B cell (primary cell): ENCODE measurements at regions of chr2 and their contacts with region 1.

Region 1: GRCh38 chr2:174748948-174749347 is 15.3 kb downstream of the CHRNA1 start:
- DNase-seq: peak; percentile 79
- ATAC-seq: peak; percentile 26
- H3K4me3 ChIP-seq: no peak overlapping the region
- H3K4me3 Mint-ChIP-seq: peak overlapping the region; percentile 10
- H3K27ac ChIP-seq: peak overlapping the region in 1 of 2 donors; percentile 79
- H3K27ac Mint-ChIP-seq: peak overlapping the region; percentile 23
- H3K4me1 ChIP-seq: peaks cover 44 to 48% of the 10 kb centered on the region in 2 donors
- H3K4me1 Mint-ChIP-seq: peaks cover 42% of the 10 kb centered on the region
- H3K27me3 ChIP-seq: peaks cover 0 to 6% (median 0%) of the 10 kb centered on the region in 4 experiments
- H3K27me3 Mint-ChIP-seq: peaks cover 3% of the 10 kb centered on the region
- CTCF ChIP-seq: peak; percentile 89

Region 2: GRCh38 chr2:174593574-174594203 is 155.3 kb before region 1 on chr2:
- CTCF ChIA-PET with region 1: no interaction called
- POLR2A ChIA-PET with region 1: no interaction called
- intact Hi-C with region 1: loop called (anchors 2 kb)
- DNase-seq: peak; percentile 88
- ATAC-seq: peak; percentile 66
- H3K4me3 ChIP-seq: peak overlapping the region; percentile 53 to 92 (median 71)
- H3K4me3 Mint-ChIP-seq: peak overlapping the region; percentile 93
- H3K27ac ChIP-seq: peak overlapping the region; percentile 93 to 98
- H3K27ac Mint-ChIP-seq: peak overlapping the region; percentile 96
- H3K4me1 ChIP-seq: peaks cover 63 to 65% of the 10 kb centered on the region in 2 donors
- H3K4me1 Mint-ChIP-seq: peaks cover 65% of the 10 kb centered on the region
- H3K27me3 ChIP-seq: no peaks in the 10 kb centered on the region
- H3K27me3 Mint-ChIP-seq: no peaks in the 10 kb centered on the region
- CTCF ChIP-seq: no peak

Region 3: DNA sequence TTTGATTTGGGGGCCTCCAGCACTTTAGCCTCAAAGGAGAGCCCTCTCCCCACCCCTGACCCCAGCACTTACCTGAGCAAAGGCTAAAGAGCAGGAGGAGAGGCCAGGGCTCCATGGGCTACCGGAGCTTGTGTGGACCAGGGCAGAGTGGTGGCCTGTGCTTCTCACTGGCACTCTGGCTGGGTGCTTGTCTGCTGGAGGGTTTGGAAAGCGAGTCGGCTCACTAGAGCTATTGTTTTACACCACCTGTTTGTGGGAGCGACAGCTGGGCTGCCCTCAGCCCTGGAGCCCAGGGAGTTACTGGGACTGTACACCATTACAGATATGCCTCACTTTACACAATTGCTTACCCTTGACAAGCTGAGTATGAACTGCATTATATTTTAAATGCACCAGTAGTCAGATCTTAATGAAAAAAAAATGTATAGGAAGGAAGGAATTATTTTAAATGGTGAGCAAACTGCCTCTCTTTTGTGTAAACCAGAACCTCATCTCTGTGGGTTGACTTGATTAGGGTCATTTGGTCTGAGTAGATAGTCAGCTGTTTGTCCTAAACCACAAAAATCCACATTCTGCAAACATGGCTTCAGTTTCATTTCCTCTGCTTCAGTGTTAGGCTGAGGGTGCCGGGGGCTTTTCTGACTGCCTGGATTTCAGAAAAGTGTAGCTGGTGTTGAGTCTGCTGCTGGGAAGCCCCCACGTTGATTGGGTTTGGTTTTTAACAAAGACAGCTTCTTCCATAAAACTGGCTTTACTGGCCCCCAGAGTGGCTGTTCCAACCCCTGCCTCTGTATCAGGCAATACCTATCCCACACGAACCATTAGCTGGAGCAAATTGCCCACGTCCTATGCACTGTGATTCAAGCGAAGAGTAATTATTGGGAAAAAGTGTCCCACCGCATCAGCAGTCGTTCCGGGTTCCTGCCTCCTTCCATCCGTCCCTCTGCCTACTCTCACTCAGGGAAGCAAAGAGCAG is 15.6 kb after region 1 on chr2 and contains the start of gene CHRNA1:
- CTCF ChIA-PET with region 1: interaction called, 11 read pairs
- POLR2A ChIA-PET with region 1: no interaction called
- intact Hi-C with region 1: no loop called
- DNase-seq: no peak
- ATAC-seq: no peak
- H3K4me3 ChIP-seq: no peak within 1 kb of the TSS
- H3K4me3 Mint-ChIP-seq: no peak within 1 kb of the TSS
- H3K27ac ChIP-seq: no peak within 1 kb of the TSS
- H3K27ac Mint-ChIP-seq: no peak within 1 kb of the TSS
- H3K4me1 ChIP-seq: no peaks in the 10 kb centered on the region
- H3K4me1 Mint-ChIP-seq: peaks cover 5% of the 10 kb centered on the region
- H3K27me3 ChIP-seq: peaks cover 0 to 24% (median 6%) of the 10 kb centered on the region in 4 experiments
- H3K27me3 Mint-ChIP-seq: peaks cover 28% of the 10 kb centered on the region
- CTCF ChIP-seq: no peak
- total RNA-seq, gene CHRNA1: 0.20 TPM in 1 of 2 replicates, not detected in the other

Region 4: DNA sequence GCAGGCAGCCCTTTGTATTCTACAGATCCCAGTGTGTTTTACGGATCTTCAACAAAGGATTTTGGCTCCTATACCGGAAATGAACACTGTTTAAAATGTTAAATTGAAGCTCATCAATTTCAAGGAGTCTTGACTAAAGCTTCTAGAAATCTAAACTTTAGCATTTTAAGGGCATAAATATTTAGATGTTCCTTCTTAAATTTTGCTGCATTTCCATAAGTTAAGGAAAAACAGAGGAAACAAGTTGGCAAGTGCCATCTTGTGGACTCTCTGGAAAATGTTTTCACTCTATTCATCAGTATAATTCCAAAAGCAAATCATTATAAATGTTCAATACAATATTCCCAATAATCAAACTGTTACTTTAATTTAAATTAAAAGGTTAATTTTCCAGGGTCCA is 236.7 kb after region 1 on chr2:
- CTCF ChIA-PET with region 1: interaction called, 39 read pairs
- POLR2A ChIA-PET with region 1: no interaction called
- intact Hi-C with region 1: loop called (anchors 1 kb)
- DNase-seq: no peak
- ATAC-seq: no peak
- H3K4me3 ChIP-seq: no peak overlapping the region
- H3K4me3 Mint-ChIP-seq: no peak overlapping the region
- H3K27ac ChIP-seq: no peak overlapping the region
- H3K27ac Mint-ChIP-seq: no peak overlapping the region
- H3K4me1 ChIP-seq: no peaks in the 10 kb centered on the region
- H3K4me1 Mint-ChIP-seq: peaks cover 2% of the 10 kb centered on the region
- H3K27me3 ChIP-seq: peaks cover 0 to 3% (median 2%) of the 10 kb centered on the region in 4 experiments
- H3K27me3 Mint-ChIP-seq: peaks cover 18% of the 10 kb centered on the region
- CTCF ChIP-seq: no peak

Region 5: DNA sequence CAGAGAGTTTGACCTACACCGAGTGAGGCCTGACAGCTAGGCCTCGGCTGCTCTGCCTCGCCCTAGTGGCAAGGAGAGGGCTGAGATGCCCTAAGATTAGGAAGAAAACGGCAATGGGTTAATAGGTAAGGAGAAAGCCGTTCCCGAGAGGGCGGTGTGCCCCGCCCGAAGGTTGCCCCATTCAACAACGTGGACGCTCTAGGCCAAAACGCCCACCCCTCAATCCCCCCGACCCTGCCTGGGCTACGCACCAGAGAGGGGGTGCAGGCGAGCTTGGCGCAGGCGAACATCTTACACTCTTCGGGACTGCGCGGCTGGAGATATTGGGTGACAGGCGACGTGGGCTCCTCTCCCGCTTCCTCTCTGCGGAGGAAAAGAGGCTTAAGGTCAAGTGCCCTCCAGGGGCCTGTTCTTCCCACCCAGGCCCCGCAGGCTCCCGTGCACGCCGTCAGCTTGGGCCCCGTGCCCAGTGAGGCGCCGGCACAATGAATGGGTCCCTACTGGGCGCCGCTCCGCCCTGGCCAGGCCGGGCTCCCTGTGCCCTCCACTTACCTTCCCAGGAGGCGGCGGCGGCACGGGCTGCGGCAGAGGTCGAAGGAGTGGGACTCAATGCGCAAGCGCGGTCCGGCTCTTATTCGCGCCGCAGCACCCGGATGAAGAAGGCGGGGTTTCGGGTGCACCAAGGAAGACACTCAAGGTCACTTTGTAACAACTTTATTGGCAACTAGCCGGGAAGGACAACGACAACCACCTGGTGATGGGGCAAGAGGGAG is 432.3 kb after region 1 on chr2 and contains the start of gene ATP5MC3:
- CTCF ChIA-PET with region 1: no interaction called
- POLR2A ChIA-PET with region 1: no interaction called
- intact Hi-C with region 1: loop called (anchors 5 kb)
- DNase-seq: peak; percentile 95
- ATAC-seq: peak; percentile 95
- H3K4me3 ChIP-seq: peak within 1 kb of the TSS; percentile 81 to 94 (median 88)
- H3K4me3 Mint-ChIP-seq: peak within 1 kb of the TSS; percentile 91
- H3K27ac ChIP-seq: peak within 1 kb of the TSS; percentile 59 to 79
- H3K27ac Mint-ChIP-seq: peak within 1 kb of the TSS; percentile 78
- H3K4me1 ChIP-seq: peaks cover 12 to 13% of the 10 kb centered on the region in 2 donors
- H3K4me1 Mint-ChIP-seq: peaks cover 14% of the 10 kb centered on the region
- H3K27me3 ChIP-seq: no peaks in the 10 kb centered on the region
- H3K27me3 Mint-ChIP-seq: peaks cover 3% of the 10 kb centered on the region
- CTCF ChIP-seq: peak; percentile 22
- total RNA-seq, gene ATP5MC3: 68.5 and 68.9 TPM in 2 replicates